Stomach (tissue), 19 donors: ENCODE measurements at regions of chr3 and their contacts with region 1.

Region 1: GRCh38 chr3:141355242-141355641 is 13.1 kb upstream of the ZBTB38 start:
- DNase-seq: no peak
- H3K4me3 ChIP-seq: no peak overlapping the region
- H3K27ac ChIP-seq: no peak overlapping the region
- H3K4me1 ChIP-seq: no peaks in the 10 kb centered on the region
- H3K27me3 ChIP-seq: no peaks in the 10 kb centered on the region
- CTCF ChIP-seq: no peak
- EP300 ChIP-seq: no peak
- POLR2A ChIP-seq: no peak

Region 2: DNA sequence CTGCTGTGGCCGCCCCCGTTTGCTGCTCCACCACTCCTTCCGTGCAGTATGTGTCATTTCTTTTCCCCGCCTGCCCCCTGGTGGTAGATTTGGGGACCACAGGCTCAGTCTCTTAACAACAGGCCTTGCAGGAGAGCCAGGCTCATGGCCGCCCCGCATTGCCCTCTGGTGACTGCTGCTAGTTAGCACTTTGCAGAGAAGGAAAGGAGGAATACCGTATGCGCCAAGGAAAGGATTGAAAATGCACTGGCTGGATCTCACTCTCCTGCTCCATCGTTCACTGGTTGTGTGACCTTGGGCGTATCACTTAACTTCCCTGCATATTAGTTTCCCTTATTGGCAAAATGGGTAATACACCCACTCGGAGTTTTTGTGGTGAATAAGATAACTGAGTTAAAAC is 162.9 kb before region 1 on chr3:
- intact Hi-C with region 1: no loop called
- DNase-seq: peak; percentile 97 to 99
- H3K4me3 ChIP-seq: no peak overlapping the region
- H3K27ac ChIP-seq: no peak overlapping the region
- H3K4me1 ChIP-seq: peaks cover 0 to 10% (median 4%) of the 10 kb centered on the region in 4 donors
- H3K27me3 ChIP-seq: peaks cover 0 to 21% (median 5%) of the 10 kb centered on the region in 3 donors
- CTCF ChIP-seq: peak in 6 of 7 experiments; percentile 41 to 99 (median 98)
- EP300 ChIP-seq: no peak
- POLR2A ChIP-seq: no peak

Region 3: GRCh38 chr3:141452036-141452435 is 96.8 kb after region 1 on chr3:
- intact Hi-C with region 1: loop called (anchors 5 kb)
- DNase-seq: peak in 1 of 2 donors; percentile 86
- H3K4me3 ChIP-seq: no peak overlapping the region
- H3K27ac ChIP-seq: peak overlapping the region; percentile 24 to 69 (median 38)
- H3K4me1 ChIP-seq: peaks cover 16 to 82% (median 56%) of the 10 kb centered on the region in 4 donors
- H3K27me3 ChIP-seq: no peaks in the 10 kb centered on the region
- CTCF ChIP-seq: peak in 5 of 7 experiments; percentile 9 to 66 (median 41)
- EP300 ChIP-seq: no peak
- POLR2A ChIP-seq: no peak